WTC11 (cell line): ENCODE measurements at regions of chr3 and their contacts with region 1.

Region 1: GRCh38 chr3:159260049-159260662 is 458.3 kb downstream of the MFSD1 start:
- DNase-seq: peak; percentile 31
- ATAC-seq: peak; percentile 71
- H3K4me3 Mint-ChIP-seq: no peak overlapping the region
- H3K27ac Mint-ChIP-seq: no peak overlapping the region
- H3K4me1 Mint-ChIP-seq: no peaks in the 10 kb centered on the region
- H3K27me3 Mint-ChIP-seq: no peaks in the 10 kb centered on the region; the same call in 1 of the 2 replicates
- CTCF ChIP-seq: peak; percentile 57

Region 2: DNA sequence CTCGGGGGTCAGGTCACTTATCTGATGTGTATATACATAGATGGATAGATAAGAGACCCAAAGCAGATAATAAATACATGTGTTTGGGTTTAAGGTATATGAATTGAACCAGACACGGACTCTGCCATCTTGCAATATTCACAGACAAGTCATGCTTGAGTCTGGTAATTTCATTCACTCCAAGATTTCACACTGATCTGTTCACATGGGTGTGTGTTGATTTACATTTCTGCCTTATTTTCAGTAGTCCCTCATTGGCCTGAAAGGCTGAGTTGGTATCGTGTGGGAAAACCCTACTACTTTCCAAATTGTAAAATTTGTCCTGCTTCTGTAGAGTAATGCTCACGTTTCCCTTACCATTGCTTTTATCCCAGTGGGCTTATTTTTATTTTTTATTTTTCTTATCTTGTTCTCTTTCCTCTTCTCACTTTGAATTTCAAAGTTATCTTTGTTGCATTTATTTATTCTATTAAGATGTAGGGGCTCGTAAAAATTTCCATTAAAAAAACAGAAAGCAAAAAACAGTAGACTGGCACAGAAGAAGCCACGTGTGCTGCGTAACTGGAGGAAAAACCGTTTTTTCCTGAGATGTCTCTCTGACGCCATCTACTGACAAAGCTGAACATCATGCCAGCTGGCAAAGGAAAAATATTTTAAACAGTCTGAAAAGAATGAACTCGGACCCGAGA is 469.1 kb before region 1 on chr3:
- CTCF ChIA-PET with region 1: interaction called, 14 read pairs
- POLR2A ChIA-PET with region 1: no interaction called
- DNase-seq: no peak
- ATAC-seq: peak; percentile 65
- H3K4me3 Mint-ChIP-seq: no peak overlapping the region
- H3K27ac Mint-ChIP-seq: no peak overlapping the region
- H3K4me1 Mint-ChIP-seq: no peaks in the 10 kb centered on the region; the same call in 1 of the 2 replicates
- H3K27me3 Mint-ChIP-seq: peaks cover 2% of the 10 kb centered on the region
- CTCF ChIP-seq: peak; percentile 11

Region 3: DNA sequence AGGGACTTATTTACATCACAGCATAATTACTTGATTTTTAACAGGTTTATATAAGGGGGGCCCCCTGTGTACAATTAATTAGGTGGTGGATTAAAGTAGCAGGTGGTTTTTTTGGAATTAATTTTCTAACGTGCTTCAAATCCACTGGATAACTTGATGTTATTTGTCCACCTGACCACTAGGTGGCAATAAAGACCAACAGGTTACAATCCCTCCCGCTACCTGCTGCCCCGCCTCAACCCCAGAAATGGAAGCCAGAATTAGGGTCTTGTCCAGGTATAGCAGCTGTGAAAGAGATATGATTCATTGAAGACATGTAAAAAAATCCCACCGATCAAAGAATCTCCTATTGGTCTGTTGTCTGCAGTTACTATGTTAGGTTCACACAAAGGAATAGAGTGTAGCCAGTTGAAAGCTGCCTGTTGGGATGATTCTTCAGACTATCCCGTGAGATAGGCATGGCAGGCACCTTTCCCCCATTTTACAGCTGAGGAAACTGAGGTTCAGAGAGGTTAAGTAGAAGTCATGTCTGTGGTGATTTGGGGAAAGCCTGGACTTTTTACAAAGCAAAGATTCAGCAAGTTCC is 414.3 kb before region 1 on chr3:
- CTCF ChIA-PET with region 1: interaction called, 30 read pairs
- POLR2A ChIA-PET with region 1: no interaction called
- DNase-seq: peak; percentile 22
- ATAC-seq: peak; percentile 79
- H3K4me3 Mint-ChIP-seq: no peak overlapping the region
- H3K27ac Mint-ChIP-seq: no peak overlapping the region
- H3K4me1 Mint-ChIP-seq: no peaks in the 10 kb centered on the region
- H3K27me3 Mint-ChIP-seq: no peaks in the 10 kb centered on the region
- CTCF ChIP-seq: peak; percentile 78

Region 4: DNA sequence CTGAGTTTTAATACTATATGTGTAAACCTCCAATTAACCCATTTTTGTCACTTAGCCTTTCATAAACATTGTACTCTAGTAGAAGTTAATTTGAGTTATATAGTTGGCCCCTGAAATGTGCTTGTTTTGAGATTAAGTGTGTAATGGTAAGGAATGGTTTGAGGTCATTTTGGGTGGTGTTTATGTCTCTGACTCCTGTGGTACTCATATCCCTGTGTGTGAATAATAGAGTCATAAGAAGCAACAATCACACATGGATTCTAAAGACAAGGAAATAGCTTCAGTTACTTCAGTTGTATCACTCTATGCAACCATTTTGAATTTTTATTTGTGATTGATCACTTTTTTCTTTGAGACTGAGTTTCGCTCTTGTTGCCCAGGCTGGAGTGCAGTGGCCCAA is 49.8 kb before region 1 on chr3:
- CTCF ChIA-PET with region 1: no interaction called
- POLR2A ChIA-PET with region 1: no interaction called
- DNase-seq: no peak
- ATAC-seq: no peak
- H3K4me3 Mint-ChIP-seq: no peak overlapping the region
- H3K27ac Mint-ChIP-seq: no peak overlapping the region
- H3K4me1 Mint-ChIP-seq: no peaks in the 10 kb centered on the region
- H3K27me3 Mint-ChIP-seq: 0 out of 2 replicates have a peak, but pooled peaks cover 2% of the 10 kb centered on the region
- CTCF ChIP-seq: no peak

Region 5: DNA sequence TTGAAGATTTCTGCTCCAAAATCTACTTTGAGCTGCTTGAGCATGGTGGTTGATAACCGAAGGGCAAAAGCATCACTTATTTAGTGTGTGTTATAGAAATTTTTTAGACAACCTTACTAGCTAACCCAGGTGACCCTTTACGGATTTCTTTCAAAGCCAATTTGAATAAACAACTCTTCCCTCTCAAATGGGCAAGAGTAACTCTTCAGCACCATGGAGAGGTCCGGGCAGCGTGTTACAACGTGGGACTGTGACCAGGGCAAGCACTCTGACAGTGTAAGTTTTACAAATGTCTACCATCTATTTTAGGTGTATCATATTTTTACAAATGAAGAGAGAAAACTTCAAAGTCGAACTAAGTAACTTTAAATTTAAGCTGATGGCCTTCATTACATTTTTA is 13.5 kb after region 1 on chr3:
- CTCF ChIA-PET with region 1: no interaction called
- POLR2A ChIA-PET with region 1: no interaction called
- DNase-seq: peak; percentile 71
- ATAC-seq: 0 out of 2 replicates have a peak, but pooled peaks have one; percentile 47
- H3K4me3 Mint-ChIP-seq: no peak overlapping the region
- H3K27ac Mint-ChIP-seq: no peak overlapping the region
- H3K4me1 Mint-ChIP-seq: no peaks in the 10 kb centered on the region
- H3K27me3 Mint-ChIP-seq: no peaks in the 10 kb centered on the region
- CTCF ChIP-seq: no peak

Region 6: GRCh38 chr3:159532577-159532976 is 272.4 kb after region 1 on chr3:
- CTCF ChIA-PET with region 1: no interaction called
- POLR2A ChIA-PET with region 1: no interaction called
- DNase-seq: no peak
- ATAC-seq: no peak
- H3K4me3 Mint-ChIP-seq: no peak overlapping the region
- H3K27ac Mint-ChIP-seq: no peak overlapping the region
- H3K4me1 Mint-ChIP-seq: peaks cover 9% of the 10 kb centered on the region
- H3K27me3 Mint-ChIP-seq: no peaks in the 10 kb centered on the region
- CTCF ChIP-seq: no peak

Region 7: GRCh38 chr3:159586571-159587202 is 326.5 kb after region 1 on chr3:
- CTCF ChIA-PET with region 1: interaction called, 27 read pairs
- POLR2A ChIA-PET with region 1: no interaction called
- DNase-seq: peak; percentile 66
- ATAC-seq: peak; percentile 99
- H3K4me3 Mint-ChIP-seq: no peak overlapping the region
- H3K27ac Mint-ChIP-seq: no peak overlapping the region
- H3K4me1 Mint-ChIP-seq: peaks cover 8% of the 10 kb centered on the region
- H3K27me3 Mint-ChIP-seq: no peaks in the 10 kb centered on the region
- CTCF ChIP-seq: peak; percentile 58